ENCODE measurements at regions of chr18 and their contacts with region 1.

Region 1: GRCh38 chr18:23623040-23623439 is 36.7 kb upstream of the NPC1 start:
- H3K4me3 ChIP-seq: no peak overlapping the region
- H3K27ac ChIP-seq: no peak overlapping the region
- H3K4me1 ChIP-seq: peaks cover 17% of the 10 kb centered on the region
- CTCF ChIP-seq: no peak

Region 2: DNA sequence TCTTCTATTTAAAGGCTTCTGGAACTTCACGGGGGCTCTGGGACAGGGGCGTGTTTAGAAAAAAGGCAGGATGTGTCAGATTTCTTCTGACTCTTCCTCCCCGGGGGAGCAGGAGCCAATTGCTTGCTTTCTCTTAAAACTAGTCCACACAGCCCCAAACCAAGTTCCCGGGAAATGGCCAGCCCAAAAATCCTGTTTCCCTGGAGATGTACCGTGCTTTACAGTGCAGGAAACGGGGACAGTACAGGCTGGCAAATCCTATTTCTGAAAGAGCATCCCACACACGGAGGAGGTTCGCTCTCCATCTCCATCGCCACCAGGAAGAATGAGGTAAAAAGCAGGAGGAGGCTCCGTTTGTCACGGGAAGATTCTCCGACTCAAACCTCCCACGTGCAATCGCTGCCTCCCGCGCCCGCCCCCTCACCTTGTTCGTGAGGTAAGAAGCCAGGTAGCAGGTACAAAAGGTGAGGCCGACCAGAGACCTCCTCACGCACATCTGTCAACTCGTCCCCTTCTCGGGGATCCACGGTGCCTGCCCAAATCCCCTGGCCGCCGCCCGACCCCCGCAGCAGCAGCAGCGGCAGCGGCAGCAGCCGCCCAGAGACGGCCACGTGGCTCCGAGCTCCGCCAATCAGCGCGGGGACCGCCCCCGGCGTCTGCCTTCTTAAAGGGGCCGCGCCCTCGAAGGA is 185.5 kb before region 1 on chr18:
- CTCF ChIA-PET with region 1: no interaction called
- POLR2A ChIA-PET with region 1: no interaction called
- H3K4me3 ChIP-seq: peak overlapping the region; percentile 73
- H3K27ac ChIP-seq: peak overlapping the region; percentile 13; the same call in 1 of the 2 replicates
- H3K4me1 ChIP-seq: peaks cover under 1% of the 10 kb centered on the region; the same call in 1 of the 2 replicates
- CTCF ChIP-seq: no peak

Region 3: GRCh38 chr18:23612435-23613085 is 10.5 kb before region 1 on chr18:
- CTCF ChIA-PET with region 1: interaction called, 10 read pairs
- POLR2A ChIA-PET with region 1: no interaction called
- H3K4me3 ChIP-seq: no peak overlapping the region
- H3K27ac ChIP-seq: no peak overlapping the region
- H3K4me1 ChIP-seq: no peaks in the 10 kb centered on the region
- CTCF ChIP-seq: no peak

Region 4: GRCh38 chr18:23812546-23813440 is 189.8 kb after region 1 on chr18:
- CTCF ChIA-PET with region 1: interaction called, 20 read pairs
- POLR2A ChIA-PET with region 1: no interaction called
- H3K4me3 ChIP-seq: no peak overlapping the region
- H3K27ac ChIP-seq: no peak overlapping the region
- H3K4me1 ChIP-seq: no peaks in the 10 kb centered on the region
- CTCF ChIP-seq: no peak

Measured in HEK293 (cell line).